Prostate gland (tissue), 2 donors: ENCODE measurements at regions of chr5 and their contacts with region 1.

Region 1: GRCh38 chr5:179495906-179496455 is 54.4 kb upstream of the RUFY1 start:
- DNase-seq: no peak
- H3K4me3 ChIP-seq: no peak overlapping the region
- H3K27ac ChIP-seq: no peak overlapping the region
- H3K4me1 ChIP-seq: no peaks in the 10 kb centered on the region
- H3K27me3 ChIP-seq: no peaks in the 10 kb centered on the region
- CTCF ChIP-seq: no peak
- POLR2A ChIP-seq: no peak

Region 2: GRCh38 chr5:178732281-178732680 is 763.7 kb before region 1 on chr5:
- intact Hi-C with region 1: loop called (anchors 5 kb)
- DNase-seq: no peak
- H3K4me3 ChIP-seq: no peak overlapping the region
- H3K27ac ChIP-seq: no peak overlapping the region
- H3K4me1 ChIP-seq: no peaks in the 10 kb centered on the region
- H3K27me3 ChIP-seq: no peaks in the 10 kb centered on the region
- CTCF ChIP-seq: no peak
- POLR2A ChIP-seq: no peak

Region 3: GRCh38 chr5:179166886-179167841 is 328.8 kb before region 1 on chr5:
- intact Hi-C with region 1: loop called (anchors 2 kb)
- DNase-seq: no peak
- H3K4me3 ChIP-seq: peak overlapping the region in 1 of 2 donors; percentile 9
- H3K27ac ChIP-seq: no peak overlapping the region
- H3K4me1 ChIP-seq: no peaks in the 10 kb centered on the region
- H3K27me3 ChIP-seq: no peaks in the 10 kb centered on the region
- CTCF ChIP-seq: peak; percentile 88 to 97 (median 90)
- POLR2A ChIP-seq: no peak

Region 4: DNA sequence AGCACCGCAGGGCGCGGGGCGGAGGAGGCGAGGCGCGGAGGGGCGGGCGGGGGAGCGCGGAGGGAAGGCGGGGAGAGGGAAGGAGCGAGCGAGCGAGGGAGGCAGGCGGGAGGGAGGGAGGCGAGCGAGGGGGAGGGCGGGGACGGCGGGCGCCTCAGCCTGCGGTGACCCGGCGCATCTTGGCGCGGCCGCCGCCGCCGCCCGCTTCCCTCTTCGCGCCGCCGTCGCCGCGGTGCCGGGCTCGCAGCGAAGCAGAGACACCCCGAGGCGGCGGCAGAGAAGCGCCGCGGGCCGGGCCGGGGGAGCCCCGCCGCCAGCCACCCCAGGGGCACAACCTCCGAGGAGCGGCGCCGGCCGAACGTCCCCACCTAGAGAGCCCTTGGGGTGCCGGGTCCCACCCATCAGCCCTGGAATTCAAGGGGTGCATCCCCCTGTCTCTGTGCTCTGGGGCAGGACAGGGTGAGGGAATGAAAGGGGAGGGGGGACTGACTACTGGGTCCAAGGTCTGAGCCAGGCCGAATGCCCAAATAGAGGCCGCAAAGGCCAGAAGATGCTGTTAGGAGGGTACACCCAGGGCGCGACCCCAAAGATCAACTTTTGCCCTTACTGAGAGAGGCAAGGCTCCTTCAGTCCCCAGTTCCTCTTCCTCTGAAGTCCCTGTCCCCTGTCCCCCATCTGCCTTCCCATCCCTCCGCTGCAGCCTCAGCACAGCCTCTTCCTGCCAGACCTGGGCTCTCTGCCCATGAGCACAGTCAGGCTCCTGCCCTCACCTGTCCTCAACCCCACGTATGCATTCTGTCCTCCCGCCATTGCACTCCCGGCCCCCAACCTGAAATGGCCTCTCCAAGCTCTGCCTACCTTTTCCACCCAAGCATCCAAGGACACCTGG is 150.3 kb before region 1 on chr5 and contains the start of gene ADAMTS2:
- intact Hi-C with region 1: loop called (anchors 5 kb)
- DNase-seq: peak; percentile 10
- H3K4me3 ChIP-seq: peak within 1 kb of the TSS; percentile 40 to 43
- H3K27ac ChIP-seq: peak within 1 kb of the TSS; percentile 36 to 38
- H3K4me1 ChIP-seq: peaks cover 9% of the 10 kb centered on the region
- H3K27me3 ChIP-seq: peaks cover 10% of the 10 kb centered on the region
- CTCF ChIP-seq: no peak
- POLR2A ChIP-seq: no peak
- total RNA-seq, gene ADAMTS2: 2.0 to 20.3 TPM

Region 5: GRCh38 chr5:179623003-179623880 is 127.3 kb after region 1 on chr5 and contains the start of gene HNRNPH1:
- intact Hi-C with region 1: no loop called
- DNase-seq: no peak
- H3K4me3 ChIP-seq: peak within 1 kb of the TSS; percentile 99 to 100
- H3K27ac ChIP-seq: peak within 1 kb of the TSS; percentile 100
- H3K4me1 ChIP-seq: peaks cover 13% of the 10 kb centered on the region
- H3K27me3 ChIP-seq: no peaks in the 10 kb centered on the region
- CTCF ChIP-seq: peak in 1 of 4 experiments; percentile 6
- POLR2A ChIP-seq: peak; percentile 99
- total RNA-seq, gene HNRNPH1: 260 to 398 TPM

Region 6: GRCh38 chr5:179716286-179716685 is 220.3 kb after region 1 on chr5:
- intact Hi-C with region 1: no loop called
- DNase-seq: no peak
- H3K4me3 ChIP-seq: no peak overlapping the region
- H3K27ac ChIP-seq: no peak overlapping the region
- H3K4me1 ChIP-seq: no peaks in the 10 kb centered on the region
- H3K27me3 ChIP-seq: no peaks in the 10 kb centered on the region
- CTCF ChIP-seq: no peak
- POLR2A ChIP-seq: no peak